ENCODE measurements at regions of chr1 and their contacts with region 1.

Region 1: DNA sequence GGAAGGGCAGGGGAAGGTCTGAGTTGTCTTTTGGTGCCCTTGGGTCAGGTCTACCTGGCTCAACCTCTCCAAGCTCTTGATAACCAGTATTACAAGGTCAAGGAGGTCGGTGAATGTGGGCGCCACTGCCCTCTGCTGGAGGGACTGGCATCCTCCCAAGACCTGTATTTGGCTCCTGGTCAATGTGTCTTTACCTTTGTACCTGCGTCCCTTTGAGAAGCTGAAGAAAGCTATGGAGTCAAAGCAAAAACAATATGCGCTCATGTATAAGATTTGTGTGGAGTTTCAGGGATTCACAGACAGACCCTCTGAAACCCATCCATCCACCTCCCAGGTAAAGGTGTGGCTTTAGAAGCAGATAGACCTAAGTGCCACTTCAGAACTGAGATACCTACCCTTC is 61.8 kb upstream of the NBL1 start:
- DNase-seq: peak; percentile 42
- ATAC-seq: peak; percentile 100
- H3K4me3 ChIP-seq: no peak overlapping the region
- H3K27ac ChIP-seq: no peak overlapping the region
- H3K4me1 ChIP-seq: no peaks in the 10 kb centered on the region
- H3K27me3 ChIP-seq: no peaks in the 10 kb centered on the region
- CTCF ChIP-seq: peak; percentile 86 to 89 (median 87)
- EP300 ChIP-seq: no peak
- POLR2A ChIP-seq: no peak
- RAD21 ChIP-seq: peak; percentile 90

Region 2: GRCh38 chr1:19341201-19342072 is 240.9 kb before region 1 on chr1:
- CTCF ChIA-PET with region 1: interaction called, 6 read pairs
- POLR2A ChIA-PET with region 1: interaction called, 3 read pairs
- RAD21 ChIA-PET with region 1: interaction called, 4 read pairs
- SMC1A ChIA-PET with region 1: interaction called, 4 read pairs
- in situ Hi-C with region 1: loop called (anchors 5 kb)
- intact Hi-C with region 1: loop called (anchors 1 kb)
- DNase-seq: no peak
- ATAC-seq: peak; percentile 88
- H3K4me3 ChIP-seq: no peak overlapping the region
- H3K27ac ChIP-seq: no peak overlapping the region
- H3K4me1 ChIP-seq: 0 out of 2 replicates have a peak, but pooled peaks cover 2% of the 10 kb centered on the region
- H3K27me3 ChIP-seq: no peaks in the 10 kb centered on the region
- CTCF ChIP-seq: peak; percentile 81 to 96 (median 94)
- EP300 ChIP-seq: no peak
- POLR2A ChIP-seq: 0 out of 2 replicates have a peak, but pooled peaks have one; percentile 18
- RAD21 ChIP-seq: peak; percentile 40

Region 3: GRCh38 chr1:19468397-19468956 is 113.8 kb before region 1 on chr1:
- CTCF ChIA-PET with region 1: interaction called, 17 read pairs
- POLR2A ChIA-PET with region 1: interaction called, 7 read pairs
- RAD21 ChIA-PET with region 1: interaction called, 7 read pairs
- SMC1A ChIA-PET with region 1: interaction called, 5 read pairs
- in situ Hi-C with region 1: no loop called
- intact Hi-C with region 1: no loop called
- DNase-seq: no peak
- ATAC-seq: peak; percentile 88
- H3K4me3 ChIP-seq: peak overlapping the region; percentile 3; the same call in 1 of the 2 replicates
- H3K27ac ChIP-seq: peak overlapping the region; percentile 28
- H3K4me1 ChIP-seq: peaks cover 34% of the 10 kb centered on the region
- H3K27me3 ChIP-seq: no peaks in the 10 kb centered on the region
- CTCF ChIP-seq: peak in 1 of 3 experiments; percentile 18; a peak in 1 of 6 replicates
- EP300 ChIP-seq: no peak
- POLR2A ChIP-seq: 0 out of 2 replicates have a peak, but pooled peaks have one; percentile 35
- RAD21 ChIP-seq: no peak

Region 4: GRCh38 chr1:19493547-19493946 is 88.8 kb before region 1 on chr1:
- CTCF ChIA-PET with region 1: interaction called, 25 read pairs
- POLR2A ChIA-PET with region 1: no interaction called
- RAD21 ChIA-PET with region 1: interaction called, 10 read pairs
- SMC1A ChIA-PET with region 1: interaction called, 21 read pairs
- in situ Hi-C with region 1: no loop called
- intact Hi-C with region 1: no loop called
- DNase-seq: no peak
- ATAC-seq: no peak
- H3K4me3 ChIP-seq: no peak overlapping the region
- H3K27ac ChIP-seq: no peak overlapping the region
- H3K4me1 ChIP-seq: no peaks in the 10 kb centered on the region
- H3K27me3 ChIP-seq: no peaks in the 10 kb centered on the region
- CTCF ChIP-seq: no peak
- EP300 ChIP-seq: no peak
- POLR2A ChIP-seq: no peak
- RAD21 ChIP-seq: no peak

Region 5: GRCh38 chr1:19596714-19597495 is 14.6 kb after region 1 on chr1:
- CTCF ChIA-PET with region 1: interaction called, 15 read pairs
- POLR2A ChIA-PET with region 1: interaction called, 7 read pairs
- RAD21 ChIA-PET with region 1: interaction called, 4 read pairs
- SMC1A ChIA-PET with region 1: interaction called, 5 read pairs
- in situ Hi-C with region 1: no loop called
- intact Hi-C with region 1: no loop called
- DNase-seq: peak; percentile 99
- ATAC-seq: peak; percentile 89
- H3K4me3 ChIP-seq: peak overlapping the region; percentile 88
- H3K27ac ChIP-seq: peak overlapping the region; percentile 99
- H3K4me1 ChIP-seq: peaks cover 9% of the 10 kb centered on the region
- H3K27me3 ChIP-seq: no peaks in the 10 kb centered on the region
- CTCF ChIP-seq: no peak
- EP300 ChIP-seq: peak; percentile 55 to 58; a peak in 3 of 4 replicates
- POLR2A ChIP-seq: peak; percentile 89
- RAD21 ChIP-seq: no peak

Measured in GM12878 (cell line).